ENCODE measurements at regions of chr3 and their contacts with region 1.

Region 1: GRCh38 chr3:9932843-9933560 is 632 bp upstream of the CRELD1 start:
- DNase-seq: peak; percentile 79
- H3K4me3 Mint-ChIP-seq: peak overlapping the region; percentile 98
- H3K27ac Mint-ChIP-seq: peak overlapping the region; percentile 90
- H3K4me1 Mint-ChIP-seq: peaks cover 29% of the 10 kb centered on the region
- H3K27me3 Mint-ChIP-seq: no peaks in the 10 kb centered on the region

Region 2: DNA sequence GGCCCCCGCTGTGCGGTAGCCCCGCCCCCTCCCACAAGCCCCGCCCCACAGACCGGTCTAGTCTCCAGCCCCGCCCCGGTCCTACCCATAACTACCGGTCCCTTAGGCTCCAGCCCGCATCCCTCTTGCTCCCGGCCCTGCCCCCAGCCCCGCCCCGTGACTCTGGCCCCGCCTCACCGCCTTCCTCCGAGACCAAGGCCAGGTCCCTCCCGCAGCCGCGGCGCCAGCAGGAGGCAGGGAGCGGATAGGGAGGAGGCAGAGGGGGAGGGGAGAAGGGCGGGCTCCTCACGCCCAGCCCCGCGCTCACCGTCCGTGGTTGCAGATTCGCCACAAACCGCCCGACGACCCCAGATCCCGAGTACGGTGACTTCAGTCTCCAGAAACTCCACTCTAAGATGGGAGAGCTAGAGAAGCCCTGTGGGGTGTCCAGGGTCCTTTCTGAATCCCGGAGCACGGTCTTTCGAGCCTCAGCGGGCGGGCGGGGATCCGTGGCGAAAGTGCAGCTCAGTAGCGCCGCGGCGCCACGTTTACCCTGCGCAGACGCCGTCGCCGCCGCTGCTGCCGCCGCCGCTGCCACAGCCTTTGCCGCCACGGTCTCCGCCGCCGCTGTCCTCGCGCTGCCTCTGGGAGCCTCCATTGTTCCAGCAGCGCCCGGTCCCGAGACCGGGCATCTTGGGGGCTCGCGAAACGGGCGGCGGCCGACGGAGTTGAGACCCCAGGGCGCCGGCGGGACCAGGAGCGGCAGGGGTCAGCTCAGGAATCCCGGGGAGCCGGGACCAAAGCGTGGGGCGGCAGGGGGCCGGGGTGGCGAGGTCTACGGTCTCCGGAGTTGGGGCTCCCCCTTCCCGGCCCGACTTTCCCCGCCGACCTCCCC is 201.6 kb before region 1 on chr3 and contains the start of gene BRPF1:
- intact Hi-C with region 1: loop called (anchors 1 kb)
- DNase-seq: peak; percentile 96
- H3K4me3 Mint-ChIP-seq: peak within 1 kb of the TSS; percentile 96
- H3K27ac Mint-ChIP-seq: peak within 1 kb of the TSS; percentile 90
- H3K4me1 Mint-ChIP-seq: peaks cover 57% of the 10 kb centered on the region
- H3K27me3 Mint-ChIP-seq: no peaks in the 10 kb centered on the region
- total RNA-seq, gene BRPF1: 34.2 and 35.8 TPM in 2 replicates

Region 3: GRCh38 chr3:9843715-9844438 is 89.1 kb before region 1 on chr3 and contains the start of gene RPUSD3:
- intact Hi-C with region 1: loop called (anchors 2 kb)
- DNase-seq: peak; percentile 94
- H3K4me3 Mint-ChIP-seq: peak within 1 kb of the TSS; percentile 98
- H3K27ac Mint-ChIP-seq: peak within 1 kb of the TSS; percentile 94
- H3K4me1 Mint-ChIP-seq: peaks cover 16% of the 10 kb centered on the region
- H3K27me3 Mint-ChIP-seq: no peaks in the 10 kb centered on the region
- total RNA-seq, gene RPUSD3: 70.0 and 71.1 TPM in 2 replicates

Region 4: DNA sequence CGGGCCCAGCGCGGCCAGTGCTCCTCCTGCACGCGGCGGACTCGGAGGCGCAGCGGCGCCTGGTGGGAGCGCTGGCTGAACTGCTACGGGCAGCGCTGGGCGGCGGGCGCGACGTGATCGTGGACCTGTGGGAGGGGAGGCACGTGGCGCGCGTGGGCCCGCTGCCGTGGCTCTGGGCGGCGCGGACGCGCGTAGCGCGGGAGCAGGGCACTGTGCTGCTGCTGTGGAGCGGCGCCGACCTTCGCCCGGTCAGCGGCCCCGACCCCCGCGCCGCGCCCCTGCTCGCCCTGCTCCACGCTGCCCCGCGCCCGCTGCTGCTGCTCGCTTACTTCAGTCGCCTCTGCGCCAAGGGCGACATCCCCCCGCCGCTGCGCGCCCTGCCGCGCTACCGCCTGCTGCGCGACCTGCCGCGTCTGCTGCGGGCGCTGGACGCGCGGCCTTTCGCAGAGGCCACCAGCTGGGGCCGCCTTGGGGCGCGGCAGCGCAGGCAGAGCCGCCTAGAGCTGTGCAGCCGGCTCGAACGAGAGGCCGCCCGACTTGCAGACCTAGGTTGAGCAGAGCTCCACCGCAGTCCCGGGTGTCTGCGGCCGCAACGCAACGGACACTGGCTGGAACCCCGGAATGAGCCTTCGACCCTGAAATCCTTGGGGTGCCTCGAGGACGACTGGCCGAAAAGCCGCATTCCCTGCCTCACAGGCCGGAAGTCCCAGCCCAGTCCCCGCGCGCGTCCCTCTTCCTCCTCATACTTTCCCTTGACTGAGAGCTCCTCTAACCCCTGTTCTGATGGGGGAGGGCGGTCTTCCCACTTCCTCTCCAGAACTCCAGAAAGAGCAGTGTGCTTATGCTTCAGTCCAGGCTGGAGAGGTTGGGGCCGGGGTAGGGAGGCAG is 17.5 kb before region 1 on chr3:
- intact Hi-C with region 1: loop called (anchors 2 kb)
- DNase-seq: no peak
- H3K4me3 Mint-ChIP-seq: peak overlapping the region; percentile 68
- H3K27ac Mint-ChIP-seq: no peak overlapping the region
- H3K4me1 Mint-ChIP-seq: peaks cover 12% of the 10 kb centered on the region
- H3K27me3 Mint-ChIP-seq: peaks cover 13% of the 10 kb centered on the region

Region 5: GRCh38 chr3:9986237-9986725 is 53.3 kb after region 1 on chr3:
- intact Hi-C with region 1: loop called (anchors 2 kb)
- DNase-seq: no peak
- H3K4me3 Mint-ChIP-seq: peak overlapping the region; percentile 96
- H3K27ac Mint-ChIP-seq: peak overlapping the region; percentile 99
- H3K4me1 Mint-ChIP-seq: peaks cover 18% of the 10 kb centered on the region
- H3K27me3 Mint-ChIP-seq: no peaks in the 10 kb centered on the region

Region 6: GRCh38 chr3:10002951-10003350 is 69.9 kb after region 1 on chr3:
- intact Hi-C with region 1: no loop called
- DNase-seq: no peak
- H3K4me3 Mint-ChIP-seq: no peak overlapping the region
- H3K27ac Mint-ChIP-seq: no peak overlapping the region
- H3K4me1 Mint-ChIP-seq: no peaks in the 10 kb centered on the region
- H3K27me3 Mint-ChIP-seq: no peaks in the 10 kb centered on the region

Region 7: DNA sequence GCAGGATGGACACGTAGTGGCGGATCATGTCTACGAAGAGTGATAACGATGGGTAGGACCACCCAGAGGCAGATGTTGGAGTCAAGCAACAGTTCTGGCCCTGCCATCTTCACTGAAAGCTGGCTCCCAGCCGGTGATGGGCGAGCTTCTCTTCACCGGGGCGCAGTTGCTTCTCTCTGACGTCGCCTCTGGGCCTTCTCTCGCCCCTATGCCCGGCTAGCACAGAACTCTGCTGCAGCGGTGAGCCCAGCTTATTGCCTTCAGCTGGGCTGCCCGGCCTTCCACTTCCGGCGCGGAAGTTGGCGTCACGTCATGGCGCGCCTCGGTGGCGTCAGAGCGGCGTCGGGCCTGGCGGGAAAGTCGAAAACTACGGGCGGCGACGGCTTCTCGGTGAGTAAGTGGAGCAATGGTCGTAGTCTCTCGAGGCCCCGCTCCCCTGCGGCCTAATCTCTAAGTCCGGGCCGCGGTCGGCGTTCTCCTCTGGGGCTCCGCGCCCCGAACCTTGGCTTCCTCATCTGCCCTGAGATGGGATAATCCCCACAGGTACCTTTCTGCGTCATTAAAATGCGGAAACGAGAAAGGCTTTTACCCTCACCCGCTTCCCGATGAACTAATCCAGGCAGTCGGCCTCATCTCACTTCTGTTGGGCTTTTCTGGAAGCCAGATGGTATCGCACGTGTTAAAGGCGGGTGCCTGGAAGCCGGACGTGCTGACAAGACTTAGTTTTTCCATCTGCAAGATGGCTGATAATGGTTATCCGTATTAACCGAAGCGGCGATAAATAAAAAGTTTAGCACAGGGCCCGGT is 93.3 kb after region 1 on chr3 and contains the start of gene FANCD2:
- intact Hi-C with region 1: loop called (anchors 5 kb)
- DNase-seq: peak; percentile 90
- H3K4me3 Mint-ChIP-seq: peak within 1 kb of the TSS; percentile 98
- H3K27ac Mint-ChIP-seq: peak within 1 kb of the TSS; percentile 99
- H3K4me1 Mint-ChIP-seq: peaks cover 25% of the 10 kb centered on the region
- H3K27me3 Mint-ChIP-seq: no peaks in the 10 kb centered on the region
- total RNA-seq, gene FANCD2: 54.4 and 55.1 TPM in 2 replicates

Region 8: DNA sequence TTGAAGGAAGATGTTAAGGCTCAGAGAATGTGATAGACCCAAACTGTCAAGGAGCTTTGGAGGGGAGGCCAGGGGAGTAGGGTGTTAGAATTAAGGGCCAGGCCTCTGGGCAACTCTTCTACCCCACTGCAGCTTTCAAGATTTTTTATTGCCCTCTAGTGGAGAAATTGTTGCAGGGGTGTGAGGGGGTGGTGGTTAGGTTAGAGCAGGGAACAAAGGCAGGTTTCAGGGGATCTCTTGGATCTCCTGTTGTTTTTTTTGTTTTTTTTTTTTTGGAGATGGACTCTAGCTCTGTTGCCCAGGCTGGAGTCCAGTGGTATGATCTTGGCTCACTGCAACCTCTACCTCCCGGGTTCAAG is 389.3 kb after region 1 on chr3:
- intact Hi-C with region 1: loop called (anchors 5 kb)
- DNase-seq: no peak
- H3K4me3 Mint-ChIP-seq: no peak overlapping the region
- H3K27ac Mint-ChIP-seq: no peak overlapping the region
- H3K4me1 Mint-ChIP-seq: peaks cover 14% of the 10 kb centered on the region
- H3K27me3 Mint-ChIP-seq: peaks cover 15% of the 10 kb centered on the region